Panc1 (cell line): ENCODE measurements at regions of chr15 and their contacts with region 1.

Region 1: DNA sequence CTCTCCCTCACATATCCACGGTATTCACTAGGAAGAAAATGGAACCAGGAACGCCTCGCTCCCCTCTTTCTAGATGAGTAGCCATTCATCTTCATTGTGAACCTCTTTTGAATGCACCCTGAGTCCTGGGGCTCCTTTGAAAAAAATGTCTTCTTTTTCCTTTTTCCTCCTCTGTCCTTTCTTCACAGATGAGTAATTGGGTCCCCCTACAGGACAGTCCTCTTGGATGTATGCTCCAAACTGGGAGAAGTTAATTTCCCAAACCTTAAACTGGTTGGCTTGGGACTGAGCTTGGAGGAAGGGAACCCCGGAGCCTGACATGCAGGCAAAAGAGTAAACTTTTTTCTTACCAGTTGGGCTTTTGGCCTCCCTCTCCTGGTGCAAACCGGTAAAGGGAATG is 108.8 kb downstream of the DPH6 start:
- DNase-seq: no peak
- ATAC-seq: no peak
- H3K4me3 ChIP-seq: no peak overlapping the region
- H3K27ac ChIP-seq: no peak overlapping the region
- H3K4me1 ChIP-seq: no peaks in the 10 kb centered on the region
- H3K27me3 ChIP-seq: no peaks in the 10 kb centered on the region
- CTCF ChIP-seq: peak; percentile 18; the same call in 1 of the 2 replicates

Region 2: GRCh38 chr15:35312344-35312743 is 124.8 kb before region 1 on chr15:
- CTCF ChIA-PET with region 1: no interaction called
- POLR2A ChIA-PET with region 1: interaction called, 12 read pairs
- in situ Hi-C with region 1: no loop called
- intact Hi-C with region 1: no loop called
- DNase-seq: no peak
- ATAC-seq: no peak
- H3K4me3 ChIP-seq: no peak overlapping the region
- H3K27ac ChIP-seq: 0 out of 2 replicates have a peak overlapping the region, but pooled peaks have one; percentile 25
- H3K4me1 ChIP-seq: peaks cover 3% of the 10 kb centered on the region; the same call in 1 of the 2 replicates
- H3K27me3 ChIP-seq: no peaks in the 10 kb centered on the region
- CTCF ChIP-seq: no peak

Region 3: GRCh38 chr15:35858707-35859106 is 421.6 kb after region 1 on chr15:
- CTCF ChIA-PET with region 1: no interaction called
- POLR2A ChIA-PET with region 1: no interaction called
- in situ Hi-C with region 1: no loop called
- intact Hi-C with region 1: no loop called
- DNase-seq: no peak
- ATAC-seq: no peak
- H3K4me3 ChIP-seq: no peak overlapping the region
- H3K27ac ChIP-seq: no peak overlapping the region
- H3K4me1 ChIP-seq: no peaks in the 10 kb centered on the region
- H3K27me3 ChIP-seq: no peaks in the 10 kb centered on the region
- CTCF ChIP-seq: no peak